Motor neuron (in vitro differentiated cells): ENCODE measurements at regions of chr22 and their contacts with region 1.

Region 1: GRCh38 chr22:46303347-46303965 is 6.8 kb downstream of the GTSE1 start:
- ATAC-seq: no peak
- H3K4me3 ChIP-seq: no peak overlapping the region
- H3K27ac ChIP-seq: no peak overlapping the region
- H3K4me1 ChIP-seq: no peaks in the 10 kb centered on the region

Region 2: GRCh38 chr22:46013460-46014416 is 289.7 kb before region 1 on chr22:
- in situ Hi-C with region 1: loop called in 5 of 9 experiments (anchors 25 kb)
- ATAC-seq: peak; percentile 92 to 97 (median 95)
- H3K4me3 ChIP-seq: peak overlapping the region; percentile 25 to 41 (median 31)
- H3K27ac ChIP-seq: peak overlapping the region; percentile 3 to 76
- H3K4me1 ChIP-seq: peaks cover 3 to 5% of the 10 kb centered on the region in 2 donors

Region 3: GRCh38 chr22:46149512-46150033 is 153.9 kb before region 1 on chr22:
- in situ Hi-C with region 1: loop called in 2 of 9 experiments (anchors 25 kb)
- ATAC-seq: peak in 6 of 8 experiments; percentile 11 to 29 (median 22)
- H3K4me3 ChIP-seq: peak overlapping the region; percentile 44 to 77 (median 66)
- H3K27ac ChIP-seq: no peak overlapping the region
- H3K4me1 ChIP-seq: peaks cover 8 to 9% of the 10 kb centered on the region in 2 donors